ENCODE measurements at regions of chr5 and their contacts with region 1.

Region 1: DNA sequence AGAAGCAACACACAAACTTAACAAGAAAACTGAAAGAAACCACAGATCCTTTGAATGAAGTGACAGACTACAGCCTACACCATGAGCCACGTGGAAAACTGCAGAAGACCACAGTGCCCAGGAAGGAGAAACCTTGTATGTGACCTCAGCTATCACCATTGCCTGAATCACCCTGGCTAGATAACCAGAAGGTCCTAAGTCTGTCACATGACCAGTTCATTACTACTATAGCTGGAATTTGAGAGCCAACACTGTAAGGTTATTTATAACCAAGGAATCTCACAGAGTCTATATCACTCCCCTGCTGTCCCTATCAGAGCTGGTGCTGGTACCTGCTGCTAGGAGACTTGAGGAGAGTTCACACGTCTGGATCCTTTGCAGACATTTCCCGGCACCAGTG is 90.3 kb upstream of the FBXL17 start:
- DNase-seq: no peak
- H3K4me3 ChIP-seq: no peak overlapping the region
- H3K27ac ChIP-seq: no peak overlapping the region
- H3K4me1 ChIP-seq: no peaks in the 10 kb centered on the region
- H3K27me3 ChIP-seq: no peaks in the 10 kb centered on the region
- CTCF ChIP-seq: no peak
- POLR2A ChIP-seq: no peak

Region 2: GRCh38 chr5:108935611-108936010 is 463.4 kb after region 1 on chr5:
- intact Hi-C with region 1: no loop called
- DNase-seq: no peak
- H3K4me3 ChIP-seq: no peak overlapping the region
- H3K27ac ChIP-seq: no peak overlapping the region
- H3K4me1 ChIP-seq: no peaks in the 10 kb centered on the region
- H3K27me3 ChIP-seq: no peaks in the 10 kb centered on the region
- CTCF ChIP-seq: no peak
- POLR2A ChIP-seq: no peak

Region 3: GRCh38 chr5:110321117-110321516 is 1848.9 kb after region 1 on chr5:
- intact Hi-C with region 1: loop called (anchors 5 kb)
- DNase-seq: no peak
- H3K4me3 ChIP-seq: no peak overlapping the region
- H3K27ac ChIP-seq: no peak overlapping the region
- H3K4me1 ChIP-seq: no peaks in the 10 kb centered on the region
- H3K27me3 ChIP-seq: no peaks in the 10 kb centered on the region
- CTCF ChIP-seq: no peak
- POLR2A ChIP-seq: no peak